ENCODE measurements at regions of chr11 and their contacts with region 1.

Region 1: DNA sequence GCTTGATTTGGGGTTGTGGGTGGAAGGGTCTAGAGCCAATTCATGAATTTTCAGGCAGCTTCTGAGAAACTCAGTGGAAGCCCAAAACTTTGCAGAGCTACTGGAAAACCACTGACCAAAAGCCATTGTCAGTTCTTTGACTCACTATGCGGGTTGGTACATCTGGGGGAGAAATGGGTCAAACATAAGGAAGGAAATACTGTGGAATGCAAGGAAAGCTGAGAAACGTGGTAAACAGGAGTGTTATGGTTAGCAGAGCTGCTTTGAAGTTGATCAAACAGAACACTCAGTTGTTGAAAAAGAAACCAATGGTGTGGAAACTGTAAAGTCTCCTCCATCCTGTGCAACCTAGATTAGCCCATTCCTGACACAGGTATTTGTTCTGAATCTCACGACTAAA is 6.3 kb upstream of the ABTB2 start:
- DNase-seq: no peak
- H3K4me3 ChIP-seq: no peak overlapping the region
- H3K27ac ChIP-seq: peak overlapping the region in 1 of 8 donors; percentile 23
- H3K4me1 ChIP-seq: peaks cover 0 to 8% (median 5%) of the 10 kb centered on the region in 6 donors
- H3K27me3 ChIP-seq: peaks cover 0 to 25% (median 0%) of the 10 kb centered on the region in 7 donors
- CTCF ChIP-seq: no peak
- POLR2A ChIP-seq: no peak

Region 2: DNA sequence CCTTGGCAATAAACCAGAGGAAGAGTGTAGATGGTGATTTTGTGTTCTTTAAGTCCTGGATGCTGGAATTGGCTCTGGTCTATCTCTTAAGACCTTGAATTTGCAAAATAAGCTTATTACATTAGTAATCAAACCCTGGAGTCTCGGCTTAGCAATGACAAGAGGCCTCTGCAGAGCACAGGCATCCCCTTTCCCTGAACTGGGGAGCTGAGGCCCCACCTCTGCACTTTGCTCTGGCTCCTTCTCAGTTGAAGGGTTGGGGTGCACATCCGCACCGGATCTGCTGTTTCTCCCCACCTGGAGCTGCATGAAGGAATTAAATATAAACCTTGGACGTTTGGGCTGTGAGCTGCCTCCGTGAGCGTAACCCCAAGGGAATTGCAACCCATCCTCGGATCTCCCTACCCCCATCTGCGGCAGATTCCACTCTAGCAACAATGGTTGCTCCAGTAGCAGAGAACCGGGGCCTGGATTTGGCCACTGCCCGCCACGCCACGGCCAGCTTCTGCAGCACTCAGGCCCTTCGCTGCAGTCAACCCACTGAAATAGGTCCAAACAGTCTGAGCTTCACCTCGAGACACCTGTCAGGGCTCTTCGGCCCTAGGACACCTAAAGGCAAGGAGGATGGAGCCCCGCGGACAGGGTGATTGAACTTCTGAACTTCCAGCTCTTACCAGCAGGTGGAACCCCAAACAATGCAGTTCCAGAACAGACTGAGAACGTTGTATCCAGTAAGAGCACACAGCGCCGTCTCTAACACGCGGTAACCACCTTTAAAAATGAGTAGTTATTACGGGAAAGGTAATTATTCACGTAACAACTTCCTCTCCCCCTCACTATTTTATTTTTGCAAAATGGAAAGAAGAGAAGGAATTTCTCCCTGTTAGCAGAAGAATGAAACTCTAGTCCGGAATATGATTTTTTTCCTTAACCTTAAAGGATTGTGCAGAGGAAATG is 367.3 kb before region 1 on chr11:
- intact Hi-C with region 1: loop called (anchors 5 kb)
- DNase-seq: peak; percentile 82
- H3K4me3 ChIP-seq: peak overlapping the region in 1 of 8 donors; percentile 7
- H3K27ac ChIP-seq: no peak overlapping the region
- H3K4me1 ChIP-seq: peaks cover 4 to 12% (median 8%) of the 10 kb centered on the region in 6 donors
- H3K27me3 ChIP-seq: peaks cover 0 to 29% (median 0%) of the 10 kb centered on the region in 7 donors
- CTCF ChIP-seq: peak; percentile 62 to 89 (median 83)
- POLR2A ChIP-seq: no peak